ENCODE measurements at regions of chr21 and their contacts with region 1.

Region 1: DNA sequence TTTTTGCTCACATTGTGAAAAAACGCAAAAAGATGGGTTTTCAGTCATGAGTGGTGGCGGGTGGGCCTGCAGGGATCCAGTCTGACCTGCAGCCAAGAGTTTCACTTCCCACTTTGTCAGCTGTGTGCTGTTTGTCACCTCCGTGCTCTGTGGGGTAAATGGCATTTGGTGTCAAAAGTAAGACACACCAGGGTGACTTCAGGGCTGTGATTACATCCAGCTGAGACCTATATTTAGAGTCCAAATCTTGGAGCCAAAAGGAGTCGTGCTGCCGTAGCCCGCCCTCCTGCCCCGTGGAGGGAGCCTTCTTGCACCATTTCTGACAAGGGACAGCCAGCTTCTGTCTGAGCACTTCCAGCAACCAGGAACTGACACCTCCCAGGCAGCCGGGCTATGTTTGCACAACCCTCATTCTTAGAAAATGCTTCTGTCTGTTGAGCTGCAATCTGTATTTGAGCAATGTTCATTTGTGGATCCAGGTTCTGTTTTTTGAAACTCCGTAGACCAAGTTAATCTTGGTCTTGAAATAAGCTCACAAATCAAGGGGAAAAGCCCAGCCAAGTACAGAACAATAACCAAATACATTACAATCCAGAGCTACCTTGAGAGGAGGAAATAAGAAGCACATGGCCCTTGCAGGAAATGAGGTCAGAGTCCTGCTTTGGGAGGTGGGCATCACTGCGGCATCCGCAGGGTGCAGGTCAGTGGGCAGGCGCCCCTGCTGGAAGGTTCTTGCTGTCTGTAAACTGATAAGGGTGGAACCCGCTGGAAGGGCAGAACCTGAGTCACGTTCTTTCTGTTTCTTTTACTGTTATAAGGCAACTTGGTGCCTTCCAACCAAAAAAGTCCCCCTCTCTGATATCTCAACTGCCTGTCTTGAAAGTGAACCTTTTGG is 14.4 kb downstream of the ABCG1 start:
- DNase-seq: peak; percentile 81
- H3K4me3 Mint-ChIP-seq: peak overlapping the region; percentile 65
- H3K27ac Mint-ChIP-seq: peak overlapping the region; percentile 93
- H3K4me1 Mint-ChIP-seq: peaks cover 97% of the 10 kb centered on the region
- H3K27me3 Mint-ChIP-seq: no peaks in the 10 kb centered on the region

Region 2: GRCh38 chr21:42135386-42136052 is 97.8 kb before region 1 on chr21:
- CTCF ChIA-PET with region 1: no interaction called
- POLR2A ChIA-PET with region 1: no interaction called
- DNase-seq: no peak
- H3K4me3 Mint-ChIP-seq: no peak overlapping the region
- H3K27ac Mint-ChIP-seq: no peak overlapping the region
- H3K4me1 Mint-ChIP-seq: no peaks in the 10 kb centered on the region
- H3K27me3 Mint-ChIP-seq: no peaks in the 10 kb centered on the region

Region 3: GRCh38 chr21:42220138-42220701 is 13.1 kb before region 1 on chr21:
- CTCF ChIA-PET with region 1: interaction called, 18 read pairs
- POLR2A ChIA-PET with region 1: interaction called, 5 read pairs
- DNase-seq: peak; percentile 85
- H3K4me3 Mint-ChIP-seq: peak overlapping the region; percentile 81
- H3K27ac Mint-ChIP-seq: peak overlapping the region; percentile 89
- H3K4me1 Mint-ChIP-seq: peaks cover 31% of the 10 kb centered on the region
- H3K27me3 Mint-ChIP-seq: no peaks in the 10 kb centered on the region

Region 4: DNA sequence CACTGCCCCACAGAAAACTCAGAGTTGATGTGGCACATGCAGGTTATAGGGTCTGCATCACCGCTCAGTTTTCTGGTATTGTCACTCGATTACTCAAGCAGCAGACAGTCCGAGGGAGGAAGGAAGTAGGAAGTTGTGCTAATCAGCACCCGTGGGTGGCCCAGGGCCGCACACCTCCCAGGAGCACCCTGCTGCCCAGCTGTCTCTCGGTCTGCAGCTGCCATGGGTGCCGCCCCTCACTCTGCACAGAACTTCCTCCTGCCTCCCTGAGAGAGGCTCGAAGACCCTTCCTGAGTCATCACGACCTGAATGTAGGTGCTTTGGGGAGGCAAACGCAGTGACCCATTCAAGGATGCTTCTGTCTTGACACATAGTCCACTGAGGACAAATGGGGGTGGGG is 86.1 kb after region 1 on chr21:
- CTCF ChIA-PET with region 1: no interaction called
- POLR2A ChIA-PET with region 1: no interaction called
- DNase-seq: no peak
- H3K4me3 Mint-ChIP-seq: no peak overlapping the region
- H3K27ac Mint-ChIP-seq: no peak overlapping the region
- H3K4me1 Mint-ChIP-seq: peaks cover 3% of the 10 kb centered on the region
- H3K27me3 Mint-ChIP-seq: peaks cover 9% of the 10 kb centered on the region